Natural killer cell (primary cell): ENCODE measurements at regions of chr17 and their contacts with region 1.

Region 1: GRCh38 chr17:75779231-75779986 is 5.2 kb upstream of the UNK start:
- DNase-seq: peak; percentile 93 to 99
- ATAC-seq: peak; percentile 51 to 82 (median 70)
- H3K4me3 ChIP-seq: peak overlapping the region; percentile 93
- H3K4me3 Mint-ChIP-seq: peak overlapping the region; percentile 99
- H3K27ac ChIP-seq: peak overlapping the region; percentile 97
- H3K27ac Mint-ChIP-seq: peak overlapping the region; percentile 95 to 99
- H3K4me1 ChIP-seq: peaks cover 46% of the 10 kb centered on the region
- H3K4me1 Mint-ChIP-seq: peaks cover 62 to 70% of the 10 kb centered on the region in 2 donors
- H3K27me3 ChIP-seq: no peaks in the 10 kb centered on the region
- H3K27me3 Mint-ChIP-seq: peaks cover 0 to 4% of the 10 kb centered on the region in 2 donors
- CTCF ChIP-seq: peak; percentile 1

Region 2: GRCh38 chr17:75764711-75765421 is 14.5 kb before region 1 on chr17 and contains the start of gene GALK1:
- intact Hi-C with region 1: loop called (anchors 2 kb)
- DNase-seq: peak; percentile 56 to 87
- ATAC-seq: peak; percentile 83 to 93 (median 93)
- H3K4me3 ChIP-seq: peak within 1 kb of the TSS; percentile 58
- H3K4me3 Mint-ChIP-seq: peak within 1 kb of the TSS; percentile 82
- H3K27ac ChIP-seq: peak within 1 kb of the TSS; percentile 41
- H3K27ac Mint-ChIP-seq: peak within 1 kb of the TSS in 1 of 2 donors; percentile 66
- H3K4me1 ChIP-seq: peaks cover 22% of the 10 kb centered on the region
- H3K4me1 Mint-ChIP-seq: peaks cover 7 to 30% of the 10 kb centered on the region in 2 donors
- H3K27me3 ChIP-seq: no peaks in the 10 kb centered on the region
- H3K27me3 Mint-ChIP-seq: no peaks in the 10 kb centered on the region
- CTCF ChIP-seq: peak; percentile 75
- total RNA-seq, gene GALK1: 11.9 to 15.9 (median 12.6) TPM

Region 3: GRCh38 chr17:75843561-75844529 is 64.4 kb after region 1 on chr17 and contains the start of gene UNC13D:
- intact Hi-C with region 1: loop called (anchors 5 kb)
- DNase-seq: peak; percentile 65 to 79
- ATAC-seq: peak; percentile 70 to 81 (median 70)
- H3K4me3 ChIP-seq: peak within 1 kb of the TSS; percentile 84
- H3K4me3 Mint-ChIP-seq: peak within 1 kb of the TSS; percentile 93
- H3K27ac ChIP-seq: peak within 1 kb of the TSS; percentile 95
- H3K27ac Mint-ChIP-seq: peak within 1 kb of the TSS; percentile 86 to 94
- H3K4me1 ChIP-seq: peaks cover 49% of the 10 kb centered on the region
- H3K4me1 Mint-ChIP-seq: peaks cover 10 to 27% of the 10 kb centered on the region in 2 donors
- H3K27me3 ChIP-seq: no peaks in the 10 kb centered on the region
- H3K27me3 Mint-ChIP-seq: no peaks in the 10 kb centered on the region
- CTCF ChIP-seq: no peak
- total RNA-seq, gene UNC13D: 269 to 279 (median 277) TPM

Region 4: DNA sequence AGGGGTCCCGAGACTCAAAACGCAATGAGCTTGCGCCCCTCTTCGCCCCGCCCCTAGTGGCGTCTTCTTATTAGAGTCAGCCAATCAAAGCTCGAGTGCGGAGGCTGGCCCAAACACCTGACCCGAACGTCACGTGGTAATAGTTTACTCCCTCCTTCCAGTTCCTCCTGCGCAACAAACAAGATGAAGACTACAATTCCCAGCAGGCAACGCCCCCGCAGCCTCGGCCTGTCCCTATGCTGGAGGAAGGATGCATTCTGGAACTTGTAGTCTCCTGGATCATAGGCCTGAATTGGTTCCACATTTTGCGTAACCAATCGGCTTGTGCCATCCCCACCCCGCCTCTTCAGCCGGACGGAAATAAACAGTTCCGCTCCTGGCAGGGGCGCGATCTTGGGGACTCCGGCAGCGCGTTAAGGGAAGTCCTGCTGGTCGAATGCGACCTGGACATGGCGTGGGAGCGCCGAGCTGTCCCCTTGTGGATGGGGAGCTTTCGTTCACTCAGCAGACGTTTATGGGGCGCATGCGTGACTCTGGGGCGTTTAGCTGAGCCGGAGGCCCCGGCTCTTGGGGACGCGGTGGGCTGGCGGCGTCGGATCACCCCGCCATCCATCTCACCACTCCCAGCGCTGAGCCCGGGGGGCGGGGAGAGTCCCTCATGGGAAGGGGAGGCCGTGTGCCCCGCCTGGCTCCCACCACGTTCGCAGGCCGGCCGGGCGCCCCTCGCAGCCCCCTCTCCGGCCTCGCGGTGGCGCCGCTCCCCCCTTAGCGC is 76.1 kb after region 1 on chr17 and contains the start of gene WBP2:
- intact Hi-C with region 1: loop called (anchors 1 kb)
- DNase-seq: peak; percentile 92 to 100
- ATAC-seq: peak; percentile 91 to 98 (median 91)
- H3K4me3 ChIP-seq: peak within 1 kb of the TSS; percentile 96
- H3K4me3 Mint-ChIP-seq: no peak within 1 kb of the TSS
- H3K27ac ChIP-seq: peak within 1 kb of the TSS; percentile 96
- H3K27ac Mint-ChIP-seq: no peak within 1 kb of the TSS
- H3K4me1 ChIP-seq: peaks cover 43% of the 10 kb centered on the region
- H3K4me1 Mint-ChIP-seq: peaks cover 7 to 27% of the 10 kb centered on the region in 2 donors
- H3K27me3 ChIP-seq: no peaks in the 10 kb centered on the region
- H3K27me3 Mint-ChIP-seq: no peaks in the 10 kb centered on the region
- CTCF ChIP-seq: peak; percentile 24
- total RNA-seq, gene WBP2: 81.1 to 106 (median 95.2) TPM